Activated T-helper 2 cell treated with anti-CD3 and anti-CD28 coated beads, Interferon-gamma antibody, Interleukin-2, Interleukin-4, amounts not matched to agents 10 μg/mL and 5 μg/mL and 100 μg/mL, durations not matched to agents 14 hours and 24 hours and 36 hours (primary cell): ENCODE measurements at regions of chr1 and their contacts with region 1.

Region 1: GRCh38 chr1:172180501-172181285 is 239.8 kb upstream of the C1orf105 start:
- DNase-seq: peak; percentile 40
- H3K4me3 Mint-ChIP-seq: peak overlapping the region; percentile 77
- H3K27ac Mint-ChIP-seq: peak overlapping the region; percentile 97
- H3K4me1 Mint-ChIP-seq: peaks cover 42% of the 10 kb centered on the region
- H3K27me3 Mint-ChIP-seq: no peaks in the 10 kb centered on the region

Region 2: GRCh38 chr1:171794085-171794484 is 386.6 kb before region 1 on chr1:
- intact Hi-C with region 1: no loop called
- DNase-seq: peak; percentile 32
- H3K4me3 Mint-ChIP-seq: peak overlapping the region; percentile 28
- H3K27ac Mint-ChIP-seq: peak overlapping the region; percentile 92
- H3K4me1 Mint-ChIP-seq: peaks cover 20% of the 10 kb centered on the region
- H3K27me3 Mint-ChIP-seq: no peaks in the 10 kb centered on the region

Region 3: GRCh38 chr1:172135076-172135672 is 45.5 kb before region 1 on chr1:
- intact Hi-C with region 1: loop called (anchors 1 kb)
- DNase-seq: no peak
- H3K4me3 Mint-ChIP-seq: no peak overlapping the region
- H3K27ac Mint-ChIP-seq: no peak overlapping the region
- H3K4me1 Mint-ChIP-seq: peaks cover 20% of the 10 kb centered on the region
- H3K27me3 Mint-ChIP-seq: no peaks in the 10 kb centered on the region

Region 4: GRCh38 chr1:172154551-172154950 is 26.1 kb before region 1 on chr1:
- intact Hi-C with region 1: loop called (anchors 1 kb)
- DNase-seq: no peak
- H3K4me3 Mint-ChIP-seq: peak overlapping the region; percentile 52
- H3K27ac Mint-ChIP-seq: peak overlapping the region; percentile 88
- H3K4me1 Mint-ChIP-seq: peaks cover 15% of the 10 kb centered on the region
- H3K27me3 Mint-ChIP-seq: no peaks in the 10 kb centered on the region

Region 5: DNA sequence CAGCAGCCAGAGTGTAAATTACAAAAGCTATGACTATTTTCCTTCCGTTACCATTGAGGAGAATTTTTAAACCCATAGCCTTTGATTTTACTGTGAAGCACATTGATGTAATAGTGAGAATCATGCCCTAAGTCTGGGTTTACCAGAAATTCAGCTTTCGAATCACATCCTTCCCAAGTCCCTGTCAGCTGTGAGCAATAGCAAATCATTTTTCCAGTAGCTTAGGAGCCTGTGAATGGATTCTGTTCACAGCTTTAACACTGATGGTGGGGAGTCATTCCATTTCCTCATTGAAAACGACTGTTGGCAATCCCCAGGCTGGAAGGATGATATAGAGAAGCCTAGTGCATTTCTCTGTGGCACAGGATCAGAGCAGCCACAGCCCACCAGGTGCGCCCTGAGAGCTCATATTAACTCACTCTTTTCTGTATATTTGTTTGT is 157.6 kb after region 1 on chr1:
- intact Hi-C with region 1: loop called (anchors 2 kb)
- DNase-seq: no peak
- H3K4me3 Mint-ChIP-seq: no peak overlapping the region
- H3K27ac Mint-ChIP-seq: peak overlapping the region; percentile 54
- H3K4me1 Mint-ChIP-seq: peaks cover 44% of the 10 kb centered on the region
- H3K27me3 Mint-ChIP-seq: no peaks in the 10 kb centered on the region

Region 6: GRCh38 chr1:172357753-172358385 is 177.2 kb after region 1 on chr1:
- intact Hi-C with region 1: loop called (anchors 1 kb)
- DNase-seq: no peak
- H3K4me3 Mint-ChIP-seq: no peak overlapping the region
- H3K27ac Mint-ChIP-seq: peak overlapping the region; percentile 82
- H3K4me1 Mint-ChIP-seq: peaks cover 52% of the 10 kb centered on the region
- H3K27me3 Mint-ChIP-seq: no peaks in the 10 kb centered on the region

Region 7: GRCh38 chr1:172380441-172381244 is 199.9 kb after region 1 on chr1:
- intact Hi-C with region 1: loop called (anchors 2 kb)
- DNase-seq: no peak
- H3K4me3 Mint-ChIP-seq: peak overlapping the region; percentile 52
- H3K27ac Mint-ChIP-seq: peak overlapping the region; percentile 80
- H3K4me1 Mint-ChIP-seq: peaks cover 26% of the 10 kb centered on the region
- H3K27me3 Mint-ChIP-seq: no peaks in the 10 kb centered on the region